Caco-2 (cell line): ENCODE measurements at regions of chr1 and their contacts with region 1.

Region 1: GRCh38 chr1:159214149-159214760 is 9.6 kb downstream of the ACKR1 start:
- DNase-seq: peak; percentile 47 to 65
- H3K4me3 ChIP-seq: no peak overlapping the region
- H3K4me3 Mint-ChIP-seq: no peak overlapping the region
- H3K27ac Mint-ChIP-seq: no peak overlapping the region
- H3K4me1 ChIP-seq: no peaks in the 10 kb centered on the region
- H3K4me1 Mint-ChIP-seq: peaks cover 10% of the 10 kb centered on the region
- H3K27me3 ChIP-seq: no peaks in the 10 kb centered on the region
- H3K27me3 Mint-ChIP-seq: peaks cover 9% of the 10 kb centered on the region
- CTCF ChIP-seq: peak; percentile 89

Region 2: GRCh38 chr1:159197561-159198557 is 16.4 kb before region 1 on chr1:
- CTCF ChIA-PET with region 1: interaction called, 20 read pairs
- POLR2A ChIA-PET with region 1: no interaction called
- intact Hi-C with region 1: no loop called
- DNase-seq: peak; percentile 74 to 77
- H3K4me3 ChIP-seq: no peak overlapping the region
- H3K4me3 Mint-ChIP-seq: no peak overlapping the region
- H3K27ac Mint-ChIP-seq: no peak overlapping the region
- H3K4me1 ChIP-seq: no peaks in the 10 kb centered on the region
- H3K4me1 Mint-ChIP-seq: no peaks in the 10 kb centered on the region
- H3K27me3 ChIP-seq: peaks cover 1% of the 10 kb centered on the region; the same call in 1 of the 2 replicates
- H3K27me3 Mint-ChIP-seq: peaks cover 30% of the 10 kb centered on the region
- CTCF ChIP-seq: peak; percentile 68 to 89